ENCODE measurements at regions of chr6 and their contacts with region 1.

Region 1: DNA sequence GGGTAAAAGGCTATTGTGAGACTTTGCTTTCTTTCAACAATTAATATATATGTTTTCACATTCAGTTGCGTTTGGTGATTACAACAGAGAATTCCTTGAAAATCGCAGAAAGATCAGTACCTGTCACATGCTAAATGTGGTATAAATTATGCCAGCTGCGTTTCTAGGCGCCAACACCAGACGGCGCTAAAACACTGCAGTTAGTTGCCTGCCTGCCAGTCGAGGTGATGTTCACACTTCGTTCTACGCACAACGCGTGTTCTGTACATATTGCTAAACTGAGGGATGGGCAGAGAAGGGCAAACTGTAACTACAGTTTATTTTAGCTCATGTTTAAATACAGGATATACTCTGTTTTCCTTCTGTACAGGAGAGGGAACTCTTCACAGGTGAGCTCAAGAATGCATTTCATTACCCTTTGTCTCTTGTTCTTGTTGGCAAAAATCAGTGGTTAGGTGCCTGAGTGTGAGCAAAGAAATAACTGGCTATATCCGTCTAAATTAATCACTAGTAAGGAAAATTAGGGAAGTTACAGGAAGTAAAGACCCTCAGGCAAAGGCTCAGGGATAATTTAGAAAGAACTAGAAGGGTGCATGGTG is 100.1 kb upstream of the RGS17 start:
- DNase-seq: no peak
- ATAC-seq: peak; percentile 57
- H3K4me3 ChIP-seq: no peak overlapping the region
- H3K27ac ChIP-seq: no peak overlapping the region
- H3K4me1 ChIP-seq: no peaks in the 10 kb centered on the region
- H3K27me3 ChIP-seq: no peaks in the 10 kb centered on the region
- CTCF ChIP-seq: peak; percentile 76 to 97 (median 88)
- EP300 ChIP-seq: no peak
- POLR2A ChIP-seq: no peak
- RAD21 ChIP-seq: peak; percentile 84

Region 2: GRCh38 chr6:152905551-152906299 is 325.4 kb before region 1 on chr6:
- CTCF ChIA-PET with region 1: no interaction called
- POLR2A ChIA-PET with region 1: no interaction called
- RAD21 ChIA-PET with region 1: no interaction called
- SMC1A ChIA-PET with region 1: no interaction called
- in situ Hi-C with region 1: no loop called
- intact Hi-C with region 1: no loop called
- DNase-seq: no peak
- ATAC-seq: no peak
- H3K4me3 ChIP-seq: peak overlapping the region; percentile 4; the same call in 1 of the 2 replicates
- H3K27ac ChIP-seq: no peak overlapping the region
- H3K4me1 ChIP-seq: no peaks in the 10 kb centered on the region
- H3K27me3 ChIP-seq: no peaks in the 10 kb centered on the region
- CTCF ChIP-seq: no peak
- EP300 ChIP-seq: no peak
- POLR2A ChIP-seq: no peak
- RAD21 ChIP-seq: no peak

Region 3: GRCh38 chr6:153312641-153313040 is 81.5 kb after region 1 on chr6:
- CTCF ChIA-PET with region 1: interaction called, 14 read pairs
- POLR2A ChIA-PET with region 1: interaction called, 4 read pairs
- RAD21 ChIA-PET with region 1: interaction called, 3 read pairs
- SMC1A ChIA-PET with region 1: no interaction called
- in situ Hi-C with region 1: no loop called
- intact Hi-C with region 1: loop called (anchors 1 kb)
- DNase-seq: no peak
- ATAC-seq: peak; percentile 85
- H3K4me3 ChIP-seq: no peak overlapping the region
- H3K27ac ChIP-seq: no peak overlapping the region
- H3K4me1 ChIP-seq: no peaks in the 10 kb centered on the region
- H3K27me3 ChIP-seq: no peaks in the 10 kb centered on the region
- CTCF ChIP-seq: peak; percentile 55 to 74 (median 65)
- EP300 ChIP-seq: no peak
- POLR2A ChIP-seq: no peak
- RAD21 ChIP-seq: peak; percentile 59

Region 4: DNA sequence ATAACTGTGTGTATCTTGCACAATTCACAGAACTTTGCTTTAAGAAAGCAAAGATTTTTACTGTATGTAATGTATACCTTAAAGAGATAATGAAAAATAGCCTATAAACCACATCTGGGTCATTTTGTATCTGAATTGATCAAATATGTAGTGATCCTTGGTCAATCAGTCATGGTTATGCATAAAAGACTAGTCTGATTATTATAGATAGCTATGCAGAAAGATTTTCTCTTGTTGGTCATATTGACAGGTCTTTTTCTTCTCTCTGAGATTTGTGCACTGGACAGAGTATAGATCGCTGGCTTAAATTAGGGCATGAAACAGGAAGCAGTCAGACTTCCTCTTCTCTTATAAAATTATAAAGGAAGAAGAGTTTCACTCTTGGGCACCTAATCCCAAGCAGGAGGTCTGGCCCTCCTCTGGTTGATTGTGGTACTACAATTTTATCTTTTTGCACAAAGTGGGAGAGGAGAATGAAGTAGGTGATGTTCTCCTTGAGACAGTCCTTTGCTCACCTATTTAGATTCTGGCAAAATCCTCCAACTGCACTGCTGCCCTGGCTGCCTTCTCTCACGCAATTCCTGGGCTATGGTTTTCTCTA is 280.8 kb after region 1 on chr6:
- CTCF ChIA-PET with region 1: interaction called, 3 read pairs
- POLR2A ChIA-PET with region 1: no interaction called
- RAD21 ChIA-PET with region 1: interaction called, 4 read pairs
- SMC1A ChIA-PET with region 1: interaction called, 4 read pairs
- in situ Hi-C with region 1: no loop called
- intact Hi-C with region 1: loop called (anchors 1 kb)
- DNase-seq: no peak
- ATAC-seq: peak; percentile 87
- H3K4me3 ChIP-seq: no peak overlapping the region
- H3K27ac ChIP-seq: no peak overlapping the region
- H3K4me1 ChIP-seq: no peaks in the 10 kb centered on the region
- H3K27me3 ChIP-seq: no peaks in the 10 kb centered on the region
- CTCF ChIP-seq: peak; percentile 50 to 72 (median 62)
- EP300 ChIP-seq: no peak
- POLR2A ChIP-seq: no peak
- RAD21 ChIP-seq: peak; percentile 53

Region 5: DNA sequence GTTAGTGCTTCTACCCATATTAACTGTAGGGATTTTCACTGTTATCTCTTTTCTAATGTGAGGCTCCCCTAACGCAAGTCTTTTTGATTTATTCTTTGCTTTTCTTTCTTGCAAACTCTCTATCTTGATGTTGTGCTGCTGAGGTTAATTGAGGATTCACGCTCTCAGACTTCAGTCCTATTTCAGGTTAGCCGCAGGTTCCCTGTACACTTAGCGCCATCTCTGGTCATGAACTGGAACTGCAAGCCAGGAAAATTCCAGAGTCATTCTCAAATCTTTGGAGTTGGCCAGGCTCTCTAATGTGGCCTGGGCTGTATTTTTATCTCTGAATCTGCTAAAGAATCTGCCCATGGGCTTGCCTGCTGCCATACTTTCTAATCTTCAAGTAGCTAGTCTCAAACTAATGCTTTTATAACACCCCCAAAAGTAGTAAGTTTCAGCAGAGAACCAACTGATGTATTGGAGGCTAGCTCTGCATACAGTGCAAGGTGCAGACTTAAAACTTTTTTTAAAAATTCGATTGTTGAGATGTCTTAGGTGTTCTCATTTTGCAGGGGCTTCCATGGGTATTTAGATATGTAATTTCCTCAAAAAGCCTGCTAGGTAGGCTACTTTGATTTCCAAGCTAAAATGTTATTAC is 716.8 kb after region 1 on chr6:
- CTCF ChIA-PET with region 1: interaction called, 9 read pairs
- POLR2A ChIA-PET with region 1: no interaction called
- RAD21 ChIA-PET with region 1: interaction called, 3 read pairs
- SMC1A ChIA-PET with region 1: interaction called, 7 read pairs
- in situ Hi-C with region 1: no loop called
- intact Hi-C with region 1: loop called (anchors 10 kb)
- DNase-seq: no peak
- ATAC-seq: 0 out of 3 replicates have a peak, but pooled peaks have one; percentile 42
- H3K4me3 ChIP-seq: no peak overlapping the region
- H3K27ac ChIP-seq: no peak overlapping the region
- H3K4me1 ChIP-seq: no peaks in the 10 kb centered on the region
- H3K27me3 ChIP-seq: no peaks in the 10 kb centered on the region; a peak in 1 of 4 replicates
- CTCF ChIP-seq: peak; percentile 78 to 96 (median 95)
- EP300 ChIP-seq: no peak
- POLR2A ChIP-seq: no peak
- RAD21 ChIP-seq: peak; percentile 72